ENCODE measurements at regions of chr11 and their contacts with region 1.

Region 1: DNA sequence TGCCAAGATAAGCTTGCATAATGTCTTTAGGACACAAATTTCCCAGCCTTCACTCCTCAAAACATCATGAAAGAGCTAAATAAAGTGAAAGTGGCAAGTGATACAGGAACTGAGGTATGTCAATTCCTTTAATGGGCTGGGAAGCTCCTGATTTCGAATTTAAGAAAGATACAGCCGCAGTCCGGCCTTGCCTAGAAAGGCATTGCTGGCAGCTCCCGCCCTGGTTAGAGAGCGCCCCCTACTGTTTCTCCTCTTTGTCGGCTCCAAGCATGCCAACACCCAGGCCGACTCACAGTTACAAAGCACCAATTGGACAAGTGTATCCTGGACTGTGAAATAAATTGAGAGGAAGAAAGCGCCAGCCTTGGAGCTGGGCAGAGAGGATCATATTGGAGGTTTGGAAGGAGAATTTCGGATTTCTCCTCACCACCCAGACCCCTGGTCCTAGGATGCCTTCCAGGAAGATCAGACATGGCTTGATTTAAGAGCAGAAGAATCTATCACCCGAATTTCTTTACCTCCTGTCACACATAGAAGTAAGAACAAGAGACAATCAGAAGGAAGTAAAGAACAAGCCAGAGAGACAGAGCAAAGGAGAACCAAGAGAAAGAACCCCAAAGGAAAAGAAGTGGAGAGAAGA is 84.0 kb downstream of the FAM76B start:
- DNase-seq: peak; percentile 85
- H3K4me3 Mint-ChIP-seq: no peak overlapping the region
- H3K27ac Mint-ChIP-seq: no peak overlapping the region
- H3K4me1 Mint-ChIP-seq: peaks cover 11% of the 10 kb centered on the region
- H3K27me3 Mint-ChIP-seq: peaks cover 3% of the 10 kb centered on the region

Region 2: GRCh38 chr11:95165638-95166037 is 540.0 kb before region 1 on chr11:
- CTCF ChIA-PET with region 1: interaction called, 10 read pairs
- POLR2A ChIA-PET with region 1: no interaction called
- DNase-seq: no peak
- H3K4me3 Mint-ChIP-seq: no peak overlapping the region
- H3K27ac Mint-ChIP-seq: no peak overlapping the region
- H3K4me1 Mint-ChIP-seq: peaks cover 13% of the 10 kb centered on the region
- H3K27me3 Mint-ChIP-seq: no peaks in the 10 kb centered on the region

Region 3: GRCh38 chr11:95231127-95231880 is 474.3 kb before region 1 on chr11 and contains the start of gene SESN3:
- CTCF ChIA-PET with region 1: interaction called, 14 read pairs
- POLR2A ChIA-PET with region 1: interaction called, 22 read pairs
- DNase-seq: peak; percentile 99
- H3K4me3 Mint-ChIP-seq: no peak within 1 kb of the TSS
- H3K27ac Mint-ChIP-seq: peak within 1 kb of the TSS; percentile 79
- H3K4me1 Mint-ChIP-seq: peaks cover 36% of the 10 kb centered on the region
- H3K27me3 Mint-ChIP-seq: peaks cover 12% of the 10 kb centered on the region
- total RNA-seq, gene SESN3: 23.2 to 24.6 TPM

Region 4: DNA sequence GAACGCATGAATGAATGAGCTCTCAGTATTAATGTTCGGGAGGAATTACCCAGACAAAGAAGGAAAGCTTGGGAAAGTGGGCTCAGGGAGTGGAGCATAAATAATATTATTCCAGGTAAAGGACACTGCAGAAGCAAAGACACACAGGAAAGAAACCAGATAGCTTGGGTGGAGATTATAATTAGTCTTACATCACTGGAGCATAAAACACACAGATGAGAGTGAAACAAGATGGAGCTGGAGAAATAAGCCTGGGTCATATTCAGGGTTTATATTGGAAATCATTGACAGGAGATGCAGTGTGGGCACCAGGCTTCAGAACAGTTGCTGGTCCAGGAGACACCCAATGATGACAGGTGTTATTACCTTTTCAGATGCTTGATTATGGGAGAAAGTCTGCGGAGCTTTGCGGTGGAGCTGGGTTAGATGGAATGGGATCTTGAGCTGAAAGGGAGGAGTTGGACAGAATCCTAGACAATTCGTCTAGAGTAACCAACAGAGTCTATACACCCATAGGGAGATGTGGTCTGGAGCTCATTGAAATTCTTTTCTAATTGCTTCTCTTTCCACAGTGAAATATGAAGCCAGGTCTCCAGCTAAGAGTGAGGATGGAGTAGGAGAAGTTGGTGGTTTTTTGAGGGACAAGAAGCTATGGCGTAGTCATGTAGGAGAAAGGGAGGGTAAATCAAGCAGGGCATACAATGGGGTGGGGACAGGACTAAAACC is 143.2 kb before region 1 on chr11:
- CTCF ChIA-PET with region 1: no interaction called
- POLR2A ChIA-PET with region 1: no interaction called
- DNase-seq: no peak
- H3K4me3 Mint-ChIP-seq: no peak overlapping the region
- H3K27ac Mint-ChIP-seq: no peak overlapping the region
- H3K4me1 Mint-ChIP-seq: peaks cover 6% of the 10 kb centered on the region
- H3K27me3 Mint-ChIP-seq: no peaks in the 10 kb centered on the region

Region 5: GRCh38 chr11:95592471-95592870 is 113.1 kb before region 1 on chr11:
- CTCF ChIA-PET with region 1: no interaction called
- POLR2A ChIA-PET with region 1: no interaction called
- DNase-seq: no peak
- H3K4me3 Mint-ChIP-seq: no peak overlapping the region
- H3K27ac Mint-ChIP-seq: no peak overlapping the region
- H3K4me1 Mint-ChIP-seq: no peaks in the 10 kb centered on the region
- H3K27me3 Mint-ChIP-seq: no peaks in the 10 kb centered on the region

Region 6: DNA sequence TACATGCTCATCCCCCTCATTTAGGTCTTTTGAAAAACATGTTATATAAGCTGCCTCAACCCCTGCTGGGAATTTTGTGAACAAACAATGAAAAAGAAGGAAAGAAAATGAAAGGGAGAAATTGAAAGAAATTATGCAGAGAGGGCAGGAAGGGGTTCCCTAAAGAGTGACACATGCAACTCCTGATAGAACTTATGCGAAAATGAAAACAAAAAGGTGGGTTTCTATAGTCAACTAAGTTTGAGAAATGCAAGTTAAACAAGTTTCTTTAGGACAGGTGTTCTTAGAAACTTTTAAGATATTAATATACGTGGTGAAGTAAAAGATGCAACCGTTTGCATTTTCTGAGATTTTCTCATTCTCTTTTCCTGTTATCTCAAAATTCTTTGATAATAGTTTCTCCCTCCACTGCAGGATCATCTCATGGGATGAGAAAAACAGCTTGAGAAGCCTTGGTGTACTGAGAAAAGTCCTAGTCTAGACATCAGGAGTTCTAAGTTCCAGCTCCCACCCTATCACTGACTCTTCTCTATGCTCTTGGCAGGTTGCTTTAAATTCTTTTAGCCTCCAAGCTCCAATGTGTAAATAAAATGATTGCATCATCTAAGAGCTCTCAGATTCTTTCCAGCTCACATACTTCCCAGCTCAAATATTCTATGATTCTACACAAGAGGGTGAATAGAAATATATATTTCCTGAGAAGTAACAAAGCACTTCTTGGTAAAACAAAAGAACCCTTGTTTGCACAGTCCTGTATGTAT is 25.3 kb before region 1 on chr11:
- CTCF ChIA-PET with region 1: interaction called, 12 read pairs
- POLR2A ChIA-PET with region 1: no interaction called
- DNase-seq: no peak
- H3K4me3 Mint-ChIP-seq: no peak overlapping the region
- H3K27ac Mint-ChIP-seq: peak overlapping the region; percentile 40
- H3K4me1 Mint-ChIP-seq: peaks cover 46% of the 10 kb centered on the region
- H3K27me3 Mint-ChIP-seq: no peaks in the 10 kb centered on the region

Region 7: DNA sequence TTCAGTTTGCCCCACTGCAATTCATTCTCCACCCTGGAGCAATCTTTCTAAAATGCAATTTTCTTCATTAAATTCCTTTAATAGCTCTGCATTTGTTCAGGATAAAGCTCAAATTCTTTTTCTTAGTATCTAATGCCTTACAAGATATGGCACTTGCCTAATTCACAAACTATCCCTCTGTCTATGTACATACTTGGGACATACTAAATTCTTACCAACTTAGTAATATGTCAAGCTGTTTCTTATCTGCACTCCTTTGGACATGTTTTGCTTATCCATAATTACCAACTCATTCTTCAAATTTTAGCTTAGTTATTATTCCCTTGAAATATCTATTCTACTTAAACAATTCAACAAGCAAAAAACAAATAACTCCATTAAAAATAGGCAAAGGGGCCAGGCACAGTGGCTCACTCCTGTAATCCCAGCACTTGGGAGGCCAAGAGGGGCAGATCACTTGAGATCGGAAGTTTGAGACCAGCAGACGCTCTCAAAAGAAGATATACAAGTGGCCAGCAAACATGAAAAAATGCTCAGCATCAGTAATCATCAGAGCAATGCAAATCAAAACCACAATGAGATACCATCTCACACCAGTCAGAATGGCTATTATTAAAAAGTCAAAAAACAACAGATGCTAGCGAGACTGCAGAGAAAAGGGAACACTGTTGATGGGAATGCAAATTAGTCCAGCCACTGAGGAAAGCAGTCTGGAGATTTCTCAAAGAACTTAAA is 12.9 kb before region 1 on chr11:
- CTCF ChIA-PET with region 1: interaction called, 27 read pairs
- POLR2A ChIA-PET with region 1: interaction called, 5 read pairs
- DNase-seq: no peak
- H3K4me3 Mint-ChIP-seq: no peak overlapping the region
- H3K27ac Mint-ChIP-seq: no peak overlapping the region
- H3K4me1 Mint-ChIP-seq: peaks cover 5% of the 10 kb centered on the region
- H3K27me3 Mint-ChIP-seq: no peaks in the 10 kb centered on the region

Region 8: GRCh38 chr11:95715777-95716241 is 10.2 kb after region 1 on chr11:
- CTCF ChIA-PET with region 1: interaction called, 10 read pairs
- POLR2A ChIA-PET with region 1: no interaction called
- DNase-seq: no peak
- H3K4me3 Mint-ChIP-seq: no peak overlapping the region
- H3K27ac Mint-ChIP-seq: no peak overlapping the region
- H3K4me1 Mint-ChIP-seq: peaks cover 28% of the 10 kb centered on the region
- H3K27me3 Mint-ChIP-seq: peaks cover 8% of the 10 kb centered on the region

Measured in activated CD4-positive, alpha-beta memory T cell treated with anti-CD3 and anti-CD28 coated beads, Interleukin-2, amount 10 ng/mL, durations not matched to agents 7 days and 5 days (primary cell).